ENCODE measurements at regions of chr2 and their contacts with region 1.

Region 1: GRCh38 chr2:85678794-85679672 is 11.0 kb upstream of the SFTPB start:
- DNase-seq: peak; percentile 84
- H3K4me3 Mint-ChIP-seq: no peak overlapping the region
- H3K27ac Mint-ChIP-seq: peak overlapping the region; percentile 57
- H3K4me1 Mint-ChIP-seq: peaks cover 38% of the 10 kb centered on the region
- H3K27me3 Mint-ChIP-seq: no peaks in the 10 kb centered on the region

Region 2: DNA sequence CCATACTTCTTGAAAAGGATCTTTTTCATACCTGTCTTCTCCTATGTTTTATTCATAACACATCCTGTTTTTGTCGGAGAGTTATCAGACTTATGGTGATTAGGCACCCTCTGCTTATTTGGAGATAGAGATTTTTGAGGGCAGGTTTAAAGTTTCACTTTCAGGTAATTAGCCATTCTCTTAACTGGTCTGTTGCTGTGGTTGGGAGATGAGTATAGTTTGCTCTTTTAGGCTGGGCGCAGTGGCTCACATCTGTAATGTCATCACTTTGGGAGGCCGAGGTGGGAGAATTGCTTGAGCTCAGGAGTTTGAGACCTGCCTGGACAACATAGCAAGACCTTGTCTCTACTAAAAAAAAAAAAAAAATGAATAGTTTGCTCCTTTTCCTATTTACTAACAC is 36.3 kb before region 1 on chr2:
- CTCF ChIA-PET with region 1: interaction called, 11 read pairs
- POLR2A ChIA-PET with region 1: no interaction called
- DNase-seq: peak; percentile 41
- H3K4me3 Mint-ChIP-seq: no peak overlapping the region
- H3K27ac Mint-ChIP-seq: peak overlapping the region; percentile 88
- H3K4me1 Mint-ChIP-seq: peaks cover 28% of the 10 kb centered on the region
- H3K27me3 Mint-ChIP-seq: no peaks in the 10 kb centered on the region

Region 3: DNA sequence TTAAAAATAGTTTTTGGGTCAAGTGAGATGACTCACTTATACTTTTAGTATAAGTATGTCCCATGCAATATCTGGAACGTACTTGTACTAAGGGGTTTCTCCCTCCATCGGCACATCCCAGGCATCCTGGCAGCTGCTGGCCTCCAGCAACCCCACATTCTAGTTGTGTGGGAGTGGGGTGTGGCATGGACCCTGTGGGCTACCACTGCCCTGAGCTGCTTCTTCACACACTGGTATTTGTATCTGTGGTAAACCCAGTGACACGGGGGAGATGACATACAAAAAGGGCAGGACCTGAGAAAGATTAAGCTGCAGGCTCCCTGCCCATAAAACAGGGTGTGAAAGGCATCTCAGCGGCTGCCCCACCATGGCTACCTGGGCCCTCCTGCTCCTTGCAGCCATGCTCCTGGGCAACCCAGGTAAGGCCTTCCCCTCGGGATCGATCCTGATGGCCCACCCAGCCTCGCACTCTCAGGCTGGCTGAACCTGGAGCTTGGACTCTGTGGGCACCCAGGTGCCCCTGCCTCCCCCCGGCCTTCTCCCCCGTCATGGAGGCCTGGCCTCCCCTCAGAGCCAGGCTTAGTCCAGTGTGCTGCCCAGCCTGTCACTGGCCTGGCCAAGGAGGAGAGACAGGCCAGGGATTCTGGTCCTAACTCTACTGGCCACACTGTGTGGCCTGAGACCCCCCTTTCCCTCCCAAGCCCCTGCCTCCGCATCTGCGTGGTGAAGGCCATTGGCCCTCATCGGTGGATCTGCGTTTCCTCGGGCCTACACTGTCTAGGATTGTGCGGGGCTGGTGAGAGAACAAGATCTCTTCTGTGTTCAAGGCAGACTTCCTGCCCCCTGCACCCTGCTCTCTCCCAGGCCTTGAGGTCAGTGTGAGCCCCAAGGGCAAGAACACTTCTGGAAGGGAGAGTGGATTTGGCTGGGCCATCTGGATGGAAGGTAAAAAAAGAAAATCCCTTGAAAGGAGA is 15.3 kb after region 1 on chr2 and contains the start of gene GNLY:
- CTCF ChIA-PET with region 1: interaction called, 10 read pairs
- POLR2A ChIA-PET with region 1: interaction called, 14 read pairs
- DNase-seq: peak; percentile 30
- H3K4me3 Mint-ChIP-seq: peak within 1 kb of the TSS; percentile 53
- H3K27ac Mint-ChIP-seq: peak within 1 kb of the TSS; percentile 70
- H3K4me1 Mint-ChIP-seq: peaks cover 42% of the 10 kb centered on the region
- H3K27me3 Mint-ChIP-seq: peaks cover 4% of the 10 kb centered on the region
- total RNA-seq, gene GNLY: 569 to 599 TPM

Region 4: GRCh38 chr2:85707304-85707703 is 28.3 kb after region 1 on chr2:
- CTCF ChIA-PET with region 1: interaction called, 135 read pairs
- POLR2A ChIA-PET with region 1: interaction called, 99 read pairs
- DNase-seq: peak; percentile 75
- H3K4me3 Mint-ChIP-seq: no peak overlapping the region
- H3K27ac Mint-ChIP-seq: peak overlapping the region; percentile 86
- H3K4me1 Mint-ChIP-seq: peaks cover 80% of the 10 kb centered on the region
- H3K27me3 Mint-ChIP-seq: peaks cover 5% of the 10 kb centered on the region

Region 5: DNA sequence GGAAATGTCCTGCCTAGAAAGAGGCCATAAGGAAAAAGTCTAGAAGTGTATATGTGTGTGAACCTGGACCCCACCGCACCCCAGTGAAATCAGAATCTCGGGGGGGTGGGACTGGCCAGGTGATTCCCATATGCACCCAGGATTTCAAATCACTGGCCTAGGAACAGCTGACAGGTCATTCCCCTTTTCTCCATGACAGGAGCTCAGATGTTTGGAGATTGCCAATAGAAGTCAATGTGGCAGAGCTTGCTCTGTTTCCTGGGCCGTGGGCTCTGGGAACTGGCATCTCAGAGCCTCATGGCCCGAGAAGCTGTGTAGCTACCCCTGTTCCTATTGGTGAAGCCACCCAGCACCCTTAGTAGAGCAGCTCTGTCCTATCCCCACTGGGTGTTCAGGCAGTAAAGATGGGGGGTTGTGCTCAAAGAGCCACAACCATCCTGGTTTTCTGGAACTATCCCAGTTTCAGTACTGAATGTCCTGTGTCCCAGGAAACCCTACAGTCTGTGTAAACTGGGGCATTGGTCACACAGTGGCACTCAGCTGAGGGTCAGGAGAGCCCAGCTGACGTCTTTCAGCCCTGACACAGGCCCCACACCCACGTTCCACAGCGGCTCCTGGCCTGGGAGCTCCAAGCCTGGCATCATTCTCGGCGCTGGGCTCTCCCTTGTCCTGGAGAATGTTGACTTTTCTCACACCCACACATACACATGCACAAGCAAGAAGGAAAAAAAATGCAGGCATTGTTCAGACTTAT is 34.0 kb after region 1 on chr2:
- CTCF ChIA-PET with region 1: interaction called, 135 read pairs
- POLR2A ChIA-PET with region 1: interaction called, 99 read pairs
- DNase-seq: peak; percentile 9
- H3K4me3 Mint-ChIP-seq: no peak overlapping the region
- H3K27ac Mint-ChIP-seq: no peak overlapping the region
- H3K4me1 Mint-ChIP-seq: peaks cover 54% of the 10 kb centered on the region
- H3K27me3 Mint-ChIP-seq: peaks cover 9% of the 10 kb centered on the region

Region 6: GRCh38 chr2:85728883-85729824 is 50.1 kb after region 1 on chr2:
- CTCF ChIA-PET with region 1: interaction called, 22 read pairs
- POLR2A ChIA-PET with region 1: interaction called, 4 read pairs
- DNase-seq: peak; percentile 76
- H3K4me3 Mint-ChIP-seq: no peak overlapping the region
- H3K27ac Mint-ChIP-seq: no peak overlapping the region
- H3K4me1 Mint-ChIP-seq: peaks cover 9% of the 10 kb centered on the region
- H3K27me3 Mint-ChIP-seq: peaks cover 32% of the 10 kb centered on the region

Region 7: GRCh38 chr2:85813982-85814801 is 135.2 kb after region 1 on chr2:
- CTCF ChIA-PET with region 1: interaction called, 20 read pairs
- POLR2A ChIA-PET with region 1: no interaction called
- DNase-seq: peak; percentile 88
- H3K4me3 Mint-ChIP-seq: no peak overlapping the region
- H3K27ac Mint-ChIP-seq: no peak overlapping the region
- H3K4me1 Mint-ChIP-seq: no peaks in the 10 kb centered on the region
- H3K27me3 Mint-ChIP-seq: peaks cover 31% of the 10 kb centered on the region

Measured in activated CD4-positive, alpha-beta memory T cell treated with anti-CD3 and anti-CD28 coated beads, Interleukin-2, amount 10 ng/mL, durations not matched to agents 7 days and 5 days (primary cell).